Activated T-helper 1 cell treated with anti-CD3 and anti-CD28 coated beads, Interleukin-12 subunit alpha, Interleukin-12 subunit beta, Interleukin-2, Interleukin-4 antibody, amounts not matched to agents 30 ng/mL and 10 ng/mL and 1 ng/mL, durations not matched to agents 14 hours and 24 hours and 36 hours (primary cell): ENCODE measurements at regions of chr6 and their contacts with region 1.

Region 1: GRCh38 chr6:29976588-29977424 is 34.5 kb downstream of the HLA-A start:
- DNase-seq: peak; percentile 44
- H3K4me3 Mint-ChIP-seq: peak overlapping the region; percentile 87
- H3K27ac Mint-ChIP-seq: peak overlapping the region; percentile 57
- H3K4me1 Mint-ChIP-seq: peaks cover 45% of the 10 kb centered on the region
- H3K27me3 Mint-ChIP-seq: peaks cover 56% of the 10 kb centered on the region

Region 2: DNA sequence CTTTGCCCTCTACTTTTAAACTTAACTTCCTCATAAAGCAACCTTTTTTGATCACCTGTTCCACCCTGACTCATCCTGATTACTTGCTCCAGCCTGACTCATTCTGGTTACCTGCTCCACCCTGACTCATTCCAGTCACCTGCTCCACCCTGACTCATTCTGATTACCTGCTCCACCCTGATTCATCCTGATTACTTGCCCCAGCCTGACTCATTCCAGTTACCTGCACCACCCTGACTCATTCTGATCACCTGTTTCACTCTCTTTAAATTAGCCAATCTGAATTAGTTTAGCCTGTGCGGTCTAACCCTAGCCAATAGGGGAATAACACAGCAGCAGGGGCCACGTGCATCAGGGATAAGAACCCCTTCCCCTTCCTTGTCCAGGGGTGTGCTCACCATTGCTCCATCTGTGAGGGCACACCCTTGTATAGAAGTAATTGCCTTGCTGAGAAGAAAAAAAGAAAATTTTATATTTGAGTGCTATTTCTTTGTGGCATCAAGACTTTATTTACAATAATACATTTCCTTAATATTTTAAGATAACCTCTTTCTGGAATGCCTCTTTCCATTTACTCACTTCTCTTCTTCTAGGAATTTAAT is 131.3 kb before region 1 on chr6:
- intact Hi-C with region 1: no loop called
- DNase-seq: peak; percentile 34
- H3K4me3 Mint-ChIP-seq: no peak overlapping the region
- H3K27ac Mint-ChIP-seq: peak overlapping the region; percentile 46
- H3K4me1 Mint-ChIP-seq: peaks cover 37% of the 10 kb centered on the region
- H3K27me3 Mint-ChIP-seq: peaks cover 33% of the 10 kb centered on the region

Region 3: DNA sequence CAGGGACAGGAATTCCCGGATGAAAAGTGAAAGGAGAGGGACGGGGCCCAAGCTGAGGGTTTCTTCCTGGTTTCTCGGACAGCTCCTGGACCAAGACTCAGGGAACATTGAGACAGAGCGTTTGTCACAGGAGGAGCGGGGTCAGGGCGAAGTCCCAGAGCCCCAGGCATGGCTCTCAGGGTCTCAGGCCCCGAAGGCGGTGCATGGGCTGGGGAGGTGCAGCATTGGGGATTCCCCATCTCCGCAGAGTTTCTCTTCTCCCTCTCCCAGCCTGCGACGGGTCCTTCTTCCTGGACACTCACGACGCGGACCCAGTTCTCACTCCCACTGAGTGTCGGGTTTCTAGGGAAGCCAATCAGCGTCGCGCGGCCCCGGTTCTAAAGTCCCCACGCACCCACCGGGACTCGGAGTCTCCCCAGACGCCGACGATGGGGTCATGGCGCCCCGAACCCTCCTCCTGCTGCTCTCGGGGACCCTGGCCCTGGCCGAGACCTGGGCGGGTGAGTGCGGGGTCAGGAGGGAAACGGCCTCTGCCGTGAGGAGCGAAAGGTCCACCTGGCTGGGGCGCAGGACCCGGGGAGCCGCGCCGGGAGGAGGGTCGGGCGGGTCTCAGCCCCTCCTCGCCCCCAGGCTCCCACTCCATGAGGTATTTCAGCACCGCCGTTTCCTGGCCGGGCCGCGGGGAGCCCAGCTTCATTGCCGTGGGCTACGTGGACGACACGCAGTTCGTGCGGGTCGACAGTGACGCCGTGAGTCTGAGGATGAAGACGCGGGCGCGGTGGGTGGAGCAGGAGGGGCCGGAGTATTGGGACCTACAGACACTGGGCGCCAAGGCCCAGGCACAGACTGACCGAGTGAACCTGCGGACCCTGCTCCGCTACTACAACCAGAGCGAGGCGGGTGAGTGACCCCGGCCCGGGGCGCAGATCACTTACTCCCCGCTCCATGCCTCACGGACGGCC is 29.6 kb after region 1 on chr6:
- intact Hi-C with region 1: loop called (anchors 1 kb)
- DNase-seq: no peak
- H3K4me3 Mint-ChIP-seq: peak overlapping the region; percentile 70
- H3K27ac Mint-ChIP-seq: no peak overlapping the region
- H3K4me1 Mint-ChIP-seq: peaks cover 14% of the 10 kb centered on the region
- H3K27me3 Mint-ChIP-seq: peaks cover 45% of the 10 kb centered on the region

Region 4: GRCh38 chr6:31702819-31703522 is 1726.2 kb after region 1 on chr6 and contains the start of gene ABHD16A:
- intact Hi-C with region 1: no loop called
- DNase-seq: peak; percentile 95
- H3K4me3 Mint-ChIP-seq: peak within 1 kb of the TSS; percentile 98
- H3K27ac Mint-ChIP-seq: peak within 1 kb of the TSS; percentile 97
- H3K4me1 Mint-ChIP-seq: peaks cover 26% of the 10 kb centered on the region
- H3K27me3 Mint-ChIP-seq: no peaks in the 10 kb centered on the region
- total RNA-seq, gene ABHD16A: 45.7 and 46.5 TPM in 2 replicates